ENCODE measurements at regions of chr12 and their contacts with region 1.

Region 1: GRCh38 chr12:53625946-53626701 is at the start of gene ATF7:
- DNase-seq: peak; percentile 95 to 99 (median 98)
- ATAC-seq: peak; percentile 93
- H3K4me3 ChIP-seq: peak within 1 kb of the TSS; percentile 73
- H3K4me3 Mint-ChIP-seq: peak within 1 kb of the TSS; percentile 99
- H3K27ac ChIP-seq: peak within 1 kb of the TSS; percentile 73 to 78
- H3K27ac Mint-ChIP-seq: peak within 1 kb of the TSS; percentile 91
- H3K4me1 ChIP-seq: peaks cover 26% of the 10 kb centered on the region
- H3K4me1 Mint-ChIP-seq: peaks cover 57% of the 10 kb centered on the region
- H3K27me3 ChIP-seq: no peaks in the 10 kb centered on the region
- H3K27me3 Mint-ChIP-seq: no peaks in the 10 kb centered on the region
- CTCF ChIP-seq: no peak
- total RNA-seq, gene ATF7: 13.3 to 14.3 TPM

Region 2: DNA sequence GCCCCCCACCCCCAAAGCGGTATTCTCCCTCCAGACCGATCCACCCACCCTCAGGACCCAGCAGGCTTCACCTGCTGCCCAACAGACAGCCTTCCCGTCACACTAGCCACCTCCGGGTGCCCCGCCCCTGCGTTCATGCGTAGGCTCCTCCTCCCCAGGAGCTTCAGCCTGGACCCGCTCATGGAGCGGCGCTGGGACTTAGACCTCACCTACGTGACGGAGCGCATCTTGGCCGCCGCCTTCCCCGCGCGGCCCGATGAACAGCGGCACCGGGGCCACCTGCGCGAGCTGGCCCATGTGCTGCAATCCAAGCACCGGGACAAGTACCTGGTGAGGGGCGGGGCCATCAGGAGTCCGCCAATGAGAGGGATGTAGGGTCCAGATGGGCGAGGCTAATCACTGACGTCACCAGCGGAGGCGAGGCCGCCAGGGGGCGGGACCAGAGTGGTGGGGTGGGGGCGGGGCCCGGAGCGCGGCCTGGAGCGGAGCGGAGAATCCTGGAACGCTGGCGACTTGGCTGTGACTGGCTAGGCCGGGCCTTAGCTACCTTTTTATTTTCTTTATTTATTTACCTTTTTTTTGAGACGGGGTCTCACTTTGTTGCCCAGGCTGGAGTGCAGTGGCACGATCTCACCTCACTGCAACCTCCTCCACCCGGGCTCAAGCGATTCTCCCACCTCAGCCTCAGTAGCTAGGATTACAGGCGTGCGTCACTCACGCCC is 571.9 kb before region 1 on chr12:
- CTCF ChIA-PET with region 1: no interaction called
- POLR2A ChIA-PET with region 1: no interaction called
- intact Hi-C with region 1: loop called in 1 of 2 experiments (anchors 5 kb)
- DNase-seq: peak; percentile 85 to 97 (median 91)
- ATAC-seq: peak; percentile 89
- H3K4me3 ChIP-seq: peak overlapping the region; percentile 85
- H3K4me3 Mint-ChIP-seq: peak overlapping the region; percentile 96
- H3K27ac ChIP-seq: peak overlapping the region; percentile 21 to 65
- H3K27ac Mint-ChIP-seq: peak overlapping the region; percentile 92
- H3K4me1 ChIP-seq: peaks cover 17% of the 10 kb centered on the region
- H3K4me1 Mint-ChIP-seq: peaks cover 15% of the 10 kb centered on the region
- H3K27me3 ChIP-seq: no peaks in the 10 kb centered on the region
- H3K27me3 Mint-ChIP-seq: no peaks in the 10 kb centered on the region
- CTCF ChIP-seq: no peak

Region 3: GRCh38 chr12:53543539-53543938 is 82.6 kb before region 1 on chr12:
- CTCF ChIA-PET with region 1: no interaction called
- POLR2A ChIA-PET with region 1: no interaction called
- intact Hi-C with region 1: loop called in 1 of 2 experiments (anchors 5 kb)
- DNase-seq: peak; percentile 12 to 77 (median 40)
- ATAC-seq: peak; percentile 98
- H3K4me3 ChIP-seq: no peak overlapping the region
- H3K4me3 Mint-ChIP-seq: no peak overlapping the region
- H3K27ac ChIP-seq: no peak overlapping the region
- H3K27ac Mint-ChIP-seq: peak overlapping the region; percentile 68
- H3K4me1 ChIP-seq: peaks cover 3% of the 10 kb centered on the region
- H3K4me1 Mint-ChIP-seq: peaks cover 19% of the 10 kb centered on the region
- H3K27me3 ChIP-seq: no peaks in the 10 kb centered on the region
- H3K27me3 Mint-ChIP-seq: no peaks in the 10 kb centered on the region
- CTCF ChIP-seq: peak; percentile 76

Region 4: DNA sequence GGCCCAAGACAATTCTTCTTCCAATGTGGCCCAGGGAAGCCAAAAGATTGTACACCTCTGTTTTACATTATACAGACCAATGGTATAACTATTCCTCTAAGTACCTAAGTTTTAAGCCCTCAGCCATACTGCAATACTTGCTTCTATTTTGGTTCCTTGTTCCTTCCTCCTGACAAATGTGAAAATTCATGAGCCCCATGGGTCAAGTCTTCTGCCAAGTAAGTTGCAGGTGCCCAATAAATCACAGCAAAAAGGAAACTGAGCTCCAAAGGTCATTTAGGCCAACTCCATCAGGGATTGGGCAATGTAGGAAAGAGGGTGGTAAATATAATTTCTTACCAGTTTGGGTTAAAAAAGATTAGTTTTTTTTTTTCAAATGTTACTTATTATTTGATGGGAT is 61.2 kb before region 1 on chr12:
- CTCF ChIA-PET with region 1: no interaction called
- POLR2A ChIA-PET with region 1: no interaction called
- intact Hi-C with region 1: loop called in 1 of 2 experiments (anchors 2 kb)
- DNase-seq: no peak
- ATAC-seq: no peak
- H3K4me3 ChIP-seq: no peak overlapping the region
- H3K4me3 Mint-ChIP-seq: peak overlapping the region; percentile 64
- H3K27ac ChIP-seq: no peak overlapping the region
- H3K27ac Mint-ChIP-seq: peak overlapping the region; percentile 2
- H3K4me1 ChIP-seq: peaks cover 25% of the 10 kb centered on the region
- H3K4me1 Mint-ChIP-seq: peaks cover 77% of the 10 kb centered on the region
- H3K27me3 ChIP-seq: no peaks in the 10 kb centered on the region
- H3K27me3 Mint-ChIP-seq: no peaks in the 10 kb centered on the region
- CTCF ChIP-seq: no peak

Region 5: DNA sequence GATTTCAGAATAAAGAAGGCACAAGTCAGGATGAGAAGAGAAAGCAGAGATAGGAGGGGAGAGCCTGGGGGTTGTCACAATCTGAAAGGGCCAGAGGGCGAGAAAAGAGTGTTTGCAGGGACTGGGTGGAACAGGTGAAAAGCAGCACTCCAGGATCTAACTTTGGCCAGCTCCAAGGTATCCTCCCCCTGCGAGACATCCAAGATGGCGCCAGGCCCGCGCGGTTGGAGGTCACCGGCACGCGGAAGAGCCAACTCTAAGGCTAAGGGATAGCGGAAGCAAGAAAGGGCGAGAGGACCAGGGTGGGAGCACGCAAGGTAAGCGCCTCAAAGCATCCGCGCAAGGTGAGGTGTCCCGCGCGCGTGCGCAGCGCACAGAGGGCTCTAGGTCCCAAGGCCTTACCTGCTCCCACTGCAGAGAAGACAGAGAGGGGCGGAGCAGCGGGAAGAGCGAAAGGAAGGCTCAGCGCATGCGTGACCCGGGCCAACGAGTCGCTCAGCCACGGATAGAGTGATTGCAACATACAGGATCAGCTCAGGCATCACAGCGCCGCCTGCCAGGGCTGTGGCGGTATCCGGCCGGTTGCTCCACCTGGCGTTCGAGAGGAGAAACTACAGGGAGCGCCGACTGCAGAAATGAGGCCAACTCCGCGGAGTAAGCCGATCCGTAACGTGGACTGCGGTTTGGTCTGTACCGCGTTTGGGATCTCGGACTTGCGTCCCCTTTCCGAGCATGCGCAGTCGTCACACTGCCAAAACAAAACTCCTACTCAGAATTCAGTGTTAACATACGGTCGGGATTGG is 49.7 kb after region 1 on chr12 and contains the start of gene ATP5MC2:
- CTCF ChIA-PET with region 1: interaction called, 31 read pairs
- POLR2A ChIA-PET with region 1: interaction called, 28 read pairs
- intact Hi-C with region 1: loop called (anchors 1 to 2 kb)
- DNase-seq: peak; percentile 95 to 100 (median 96)
- ATAC-seq: peak; percentile 92
- H3K4me3 ChIP-seq: peak within 1 kb of the TSS; percentile 78
- H3K4me3 Mint-ChIP-seq: peak within 1 kb of the TSS; percentile 93
- H3K27ac ChIP-seq: peak within 1 kb of the TSS; percentile 58 to 66
- H3K27ac Mint-ChIP-seq: peak within 1 kb of the TSS; percentile 90
- H3K4me1 ChIP-seq: peaks cover 31% of the 10 kb centered on the region
- H3K4me1 Mint-ChIP-seq: peaks cover 32% of the 10 kb centered on the region
- H3K27me3 ChIP-seq: peaks cover 10 to 18% of the 10 kb centered on the region in 2 experiments
- H3K27me3 Mint-ChIP-seq: peaks cover 17% of the 10 kb centered on the region
- CTCF ChIP-seq: peak; percentile 99
- total RNA-seq, gene ATP5MC2: 235 to 245 TPM

Region 6: DNA sequence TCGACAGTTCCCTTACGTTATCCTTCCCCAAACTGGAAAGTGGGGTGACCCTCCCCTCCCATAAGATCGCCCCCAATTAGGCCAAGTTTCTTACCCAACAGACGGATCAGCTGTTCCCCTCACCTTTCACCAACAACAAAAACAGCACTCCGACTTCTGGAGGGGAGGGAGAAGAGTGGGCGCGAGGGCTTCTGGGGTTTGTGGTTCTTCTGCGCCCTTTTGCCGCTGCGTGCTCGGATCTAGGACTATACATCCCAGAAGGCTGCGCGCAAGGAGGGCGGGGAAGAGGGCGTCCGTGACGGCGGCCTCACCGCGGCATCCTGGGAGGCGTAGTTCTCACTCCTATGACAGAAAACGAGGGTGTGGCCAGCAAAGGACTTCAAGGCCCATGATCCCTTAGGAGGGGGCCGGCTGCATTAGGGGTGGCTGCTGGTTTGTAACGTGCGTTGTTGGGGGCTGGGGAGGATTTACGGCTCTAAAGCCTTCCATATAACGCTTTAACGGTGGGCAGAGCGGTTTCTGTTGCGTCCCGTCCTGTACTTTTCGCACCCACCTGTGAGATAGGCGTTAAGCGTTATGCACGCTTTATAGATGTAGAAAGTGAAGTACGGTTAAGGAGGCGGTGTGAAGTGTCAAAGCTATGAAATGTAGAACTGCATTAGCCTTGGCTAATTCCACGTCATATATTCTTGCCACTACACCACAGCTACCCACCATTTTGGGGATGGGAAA is 101.4 kb after region 1 on chr12 and contains the start of gene CALCOCO1:
- CTCF ChIA-PET with region 1: no interaction called
- POLR2A ChIA-PET with region 1: no interaction called
- intact Hi-C with region 1: loop called in 1 of 2 experiments (anchors 5 kb)
- DNase-seq: peak; percentile 89 to 99 (median 96)
- ATAC-seq: peak; percentile 98
- H3K4me3 ChIP-seq: peak within 1 kb of the TSS; percentile 73
- H3K4me3 Mint-ChIP-seq: peak within 1 kb of the TSS; percentile 92
- H3K27ac ChIP-seq: peak within 1 kb of the TSS; percentile 42 to 52
- H3K27ac Mint-ChIP-seq: peak within 1 kb of the TSS; percentile 82
- H3K4me1 ChIP-seq: peaks cover 27% of the 10 kb centered on the region
- H3K4me1 Mint-ChIP-seq: peaks cover 34% of the 10 kb centered on the region
- H3K27me3 ChIP-seq: no peaks in the 10 kb centered on the region
- H3K27me3 Mint-ChIP-seq: no peaks in the 10 kb centered on the region
- CTCF ChIP-seq: no peak
- total RNA-seq, gene CALCOCO1: 66.8 to 69.3 TPM